ENCODE measurements at regions of chr16 and their contacts with region 1.

Region 1: GRCh38 chr16:2867987-2868789 is 10.2 kb upstream of the PRSS22 start:
- DNase-seq: peak; percentile 96 to 98
- ATAC-seq: peak; percentile 99
- H3K4me3 ChIP-seq: peak overlapping the region; percentile 10 to 27
- H3K27ac ChIP-seq: peak overlapping the region in 1 of 2 donors; percentile 49
- H3K4me1 ChIP-seq: peaks cover 0 to 3% of the 10 kb centered on the region in 2 donors
- H3K27me3 ChIP-seq: no peaks in the 10 kb centered on the region

Region 2: DNA sequence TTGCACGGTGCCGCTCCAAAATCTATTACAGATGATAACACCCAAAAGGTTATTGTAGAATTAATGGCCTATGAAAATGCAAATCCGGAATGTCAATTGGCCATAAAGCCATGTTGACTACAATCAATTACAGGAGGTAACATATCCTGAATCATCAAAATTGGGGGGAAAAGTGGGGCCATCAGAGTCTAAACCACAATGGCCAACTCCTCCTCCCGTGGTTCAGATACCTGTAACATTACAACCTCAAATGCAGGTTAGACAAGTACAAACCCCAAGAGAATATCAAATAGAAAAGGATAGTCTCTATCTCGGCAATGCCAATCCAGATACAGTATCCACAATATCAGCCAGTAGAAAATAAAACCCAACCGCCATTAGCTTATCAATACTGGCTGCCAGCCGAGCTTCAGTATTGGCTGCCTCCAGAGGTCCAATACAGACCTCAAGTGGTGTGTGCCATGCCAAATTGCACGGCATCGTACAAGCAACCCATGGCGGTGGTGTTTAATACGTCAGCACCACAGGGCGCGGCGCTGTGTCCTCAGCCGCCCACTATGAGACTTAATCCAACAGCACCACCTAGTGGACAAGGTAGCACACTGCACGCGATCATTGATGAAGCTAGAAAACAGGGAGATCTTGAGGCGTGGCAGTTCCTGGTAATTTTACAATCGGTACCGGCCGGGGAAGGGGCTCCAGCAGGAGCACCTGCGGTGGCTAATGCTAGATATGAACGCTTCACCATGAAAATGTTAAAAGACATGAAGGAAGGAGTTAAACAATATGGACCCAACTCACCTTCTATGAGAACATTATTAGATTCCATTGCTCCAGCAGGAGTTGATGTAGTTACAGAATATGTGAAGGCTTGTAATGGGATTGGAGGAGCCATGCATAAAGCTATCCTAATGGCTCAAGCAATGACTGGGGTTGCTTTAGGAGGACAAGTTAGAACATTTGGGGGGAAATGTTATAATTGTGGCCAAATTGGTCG is 58.8 kb after region 1 on chr16:
- intact Hi-C with region 1: loop called in 1 of 2 experiments (anchors 2 kb)
- DNase-seq: peak; percentile 91 to 94
- ATAC-seq: peak; percentile 93
- H3K4me3 ChIP-seq: no peak overlapping the region
- H3K27ac ChIP-seq: no peak overlapping the region
- H3K4me1 ChIP-seq: no peaks in the 10 kb centered on the region
- H3K27me3 ChIP-seq: no peaks in the 10 kb centered on the region